ENCODE measurements at regions of chr16 and their contacts with region 1.

Region 1: GRCh38 chr16:25875956-25876598 is 184.3 kb downstream of the HS3ST4 start:
- DNase-seq: no peak

Region 2: DNA sequence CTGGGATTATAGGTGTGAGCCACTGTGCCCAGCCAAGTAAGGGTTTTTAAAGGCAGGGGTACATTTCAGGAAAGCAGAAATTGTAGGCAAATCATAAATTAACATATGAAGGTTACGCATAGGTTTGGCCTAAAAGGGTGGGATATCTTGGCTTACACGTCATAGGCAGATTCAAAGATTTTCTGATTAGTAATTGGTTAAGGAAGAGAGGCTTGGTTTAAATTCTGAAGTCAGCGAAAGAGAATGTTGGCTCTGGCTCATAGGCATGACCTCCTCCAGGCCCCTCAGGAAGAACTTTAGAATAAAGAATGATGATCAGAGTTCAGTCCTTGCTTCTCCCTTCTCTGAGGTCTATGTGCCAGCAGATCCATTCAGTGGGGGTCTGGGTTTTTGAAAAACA is 1461.5 kb before region 1 on chr16:
- intact Hi-C with region 1: loop called in 1 of 2 experiments (anchors 5 kb)
- DNase-seq: no peak

Region 3: DNA sequence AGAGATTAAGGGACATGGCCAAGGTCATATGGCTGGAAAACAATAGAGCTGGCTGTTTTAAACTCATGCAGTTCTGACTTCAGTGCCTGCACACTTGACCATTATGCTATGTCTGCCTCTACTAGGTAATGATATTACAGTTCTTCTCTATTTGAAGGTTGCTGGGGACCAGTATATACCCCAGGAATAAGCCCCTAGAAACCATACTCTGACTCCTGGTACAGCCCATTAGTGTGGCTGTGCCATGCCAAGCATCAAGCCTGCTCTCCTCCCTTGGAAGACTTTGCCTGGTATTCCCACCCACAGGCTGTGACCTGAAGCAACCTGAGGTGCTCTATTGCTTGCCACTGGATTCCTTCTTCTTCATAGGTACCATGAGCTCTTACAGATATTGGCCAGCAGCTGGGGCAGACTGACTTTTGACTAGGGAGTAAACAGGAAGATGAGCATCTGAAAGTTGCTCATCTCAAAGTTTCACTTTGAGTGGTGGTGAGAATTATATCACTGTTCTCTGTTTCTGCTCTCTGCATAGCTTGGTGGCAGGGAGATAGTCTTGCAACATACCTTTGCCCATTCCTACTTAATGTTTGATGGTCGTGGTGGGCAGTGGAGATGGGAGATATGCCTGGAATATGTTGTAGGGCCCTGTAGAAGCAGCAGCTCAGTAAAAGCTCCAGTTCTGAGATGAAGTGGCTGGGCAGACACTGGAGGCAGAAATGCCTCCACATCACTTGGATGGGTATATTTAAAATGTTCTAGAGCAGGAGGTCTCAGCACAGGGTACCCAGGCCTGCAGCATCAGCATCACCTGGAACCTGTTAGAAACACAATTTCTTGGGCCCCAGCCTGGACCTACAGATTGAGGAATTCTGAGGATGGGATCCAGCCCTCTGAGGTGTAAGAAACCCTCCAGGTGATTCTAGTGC is 90.4 kb after region 1 on chr16:
- intact Hi-C with region 1: no loop called
- DNase-seq: no peak

Region 4: GRCh38 chr16:26220894-26221293 is 344.8 kb after region 1 on chr16:
- intact Hi-C with region 1: no loop called
- DNase-seq: no peak

Region 5: DNA sequence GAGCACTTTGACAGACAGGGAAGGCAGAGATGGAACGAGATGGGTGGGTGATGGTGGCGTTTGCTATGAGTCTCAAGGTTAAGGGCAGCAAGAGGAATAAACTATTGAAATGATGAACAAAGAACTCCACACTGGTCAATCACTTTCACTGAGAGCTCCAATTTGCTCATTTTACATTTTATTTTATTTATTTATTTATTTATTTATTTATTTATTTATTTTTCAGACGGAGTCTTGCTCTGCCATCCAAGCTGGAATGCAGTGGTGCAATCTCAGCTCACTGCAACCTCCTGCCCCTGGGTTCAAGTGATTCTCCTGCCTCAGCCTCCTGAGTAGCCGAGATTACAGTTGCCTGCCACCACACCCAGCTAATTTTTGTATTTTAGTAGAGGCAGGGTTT is 484.8 kb after region 1 on chr16:
- intact Hi-C with region 1: no loop called
- DNase-seq: no peak

Measured in posterior vena cava (tissue), 2 donors.